ENCODE measurements at regions of chr2 and their contacts with region 1.

Region 1: GRCh38 chr2:96951093-96951654 is 35.2 kb downstream of the FAM178B start:
- DNase-seq: peak; percentile 91
- H3K4me3 ChIP-seq: peak overlapping the region in 1 of 2 experiments; percentile 26; a peak in 1 of 4 replicates
- H3K27ac ChIP-seq: no peak overlapping the region
- H3K4me1 ChIP-seq: peaks cover 0 to 36% of the 10 kb centered on the region in 2 experiments; a peak in 2 of 4 replicates
- H3K27me3 ChIP-seq: no peaks in the 10 kb centered on the region
- CTCF ChIP-seq: peak; percentile 86
- EP300 ChIP-seq: no peak
- RAD21 ChIP-seq: peak; percentile 92

Region 2: DNA sequence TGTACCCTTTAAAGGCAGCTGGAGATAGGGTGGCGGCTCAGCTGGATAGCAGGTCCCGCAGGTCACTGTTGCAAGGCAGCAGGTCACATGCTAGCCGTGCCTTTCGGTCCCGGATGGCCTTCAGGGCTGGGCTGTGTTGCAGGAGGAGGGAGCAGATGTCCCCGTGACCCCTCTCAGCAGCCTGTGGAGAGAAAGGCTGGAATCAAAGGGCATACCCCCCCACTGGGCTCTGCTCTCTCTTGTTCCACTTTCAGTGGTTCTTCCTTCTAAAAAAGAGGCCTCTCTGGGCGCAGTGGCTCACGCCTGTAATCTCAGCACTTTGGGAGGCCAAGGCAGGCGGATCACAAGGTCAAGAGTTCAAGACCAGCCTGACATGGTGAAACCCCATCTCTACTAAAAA is 102.9 kb before region 1 on chr2:
- CTCF ChIA-PET with region 1: interaction called, 21 read pairs
- POLR2A ChIA-PET with region 1: no interaction called
- DNase-seq: no peak
- H3K4me3 ChIP-seq: no peak overlapping the region
- H3K27ac ChIP-seq: no peak overlapping the region
- H3K4me1 ChIP-seq: no peaks in the 10 kb centered on the region; a peak in 1 of 4 replicates
- H3K27me3 ChIP-seq: no peaks in the 10 kb centered on the region
- CTCF ChIP-seq: no peak
- EP300 ChIP-seq: no peak
- RAD21 ChIP-seq: no peak

Region 3: DNA sequence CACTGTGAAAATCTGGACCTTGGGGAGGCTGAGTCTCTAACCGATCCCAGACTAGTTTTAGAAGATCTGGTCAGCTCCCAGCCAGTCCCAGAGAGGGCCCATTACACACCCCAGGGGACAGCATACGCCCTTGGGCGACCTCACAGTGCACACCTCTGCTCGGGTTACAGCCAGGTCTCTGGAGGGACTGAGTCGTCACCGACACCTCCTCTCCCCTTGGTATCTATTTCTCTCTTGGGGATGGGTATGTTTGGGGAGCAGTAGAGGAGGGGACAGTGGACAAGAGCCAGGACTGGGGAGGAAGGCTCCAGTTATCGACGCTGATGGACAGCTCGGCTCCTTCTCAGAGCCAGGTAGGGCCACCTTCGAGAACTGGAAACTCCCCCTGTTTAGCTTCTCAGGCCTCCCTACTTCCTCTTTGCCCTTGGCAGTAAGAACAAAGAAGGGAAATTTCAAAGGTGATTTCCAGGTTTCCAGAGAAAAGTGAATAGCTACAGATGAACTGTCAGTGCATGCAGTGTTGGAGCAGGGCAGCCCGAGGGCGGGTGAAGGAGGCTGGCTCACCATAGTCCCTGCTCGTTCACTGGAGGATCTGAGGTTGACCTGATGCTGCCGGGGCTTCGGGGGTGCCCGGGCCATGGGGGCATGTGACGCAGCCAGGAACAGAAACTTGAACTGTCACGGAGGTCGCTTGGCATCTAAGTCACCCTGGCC is 76.9 kb before region 1 on chr2:
- CTCF ChIA-PET with region 1: interaction called, 93 read pairs
- POLR2A ChIA-PET with region 1: no interaction called
- DNase-seq: no peak
- H3K4me3 ChIP-seq: no peak overlapping the region
- H3K27ac ChIP-seq: no peak overlapping the region
- H3K4me1 ChIP-seq: peaks cover 9 to 57% of the 10 kb centered on the region in 2 experiments; a peak in 2 of 4 replicates
- H3K27me3 ChIP-seq: no peaks in the 10 kb centered on the region
- CTCF ChIP-seq: no peak
- EP300 ChIP-seq: no peak
- RAD21 ChIP-seq: no peak

Region 4: DNA sequence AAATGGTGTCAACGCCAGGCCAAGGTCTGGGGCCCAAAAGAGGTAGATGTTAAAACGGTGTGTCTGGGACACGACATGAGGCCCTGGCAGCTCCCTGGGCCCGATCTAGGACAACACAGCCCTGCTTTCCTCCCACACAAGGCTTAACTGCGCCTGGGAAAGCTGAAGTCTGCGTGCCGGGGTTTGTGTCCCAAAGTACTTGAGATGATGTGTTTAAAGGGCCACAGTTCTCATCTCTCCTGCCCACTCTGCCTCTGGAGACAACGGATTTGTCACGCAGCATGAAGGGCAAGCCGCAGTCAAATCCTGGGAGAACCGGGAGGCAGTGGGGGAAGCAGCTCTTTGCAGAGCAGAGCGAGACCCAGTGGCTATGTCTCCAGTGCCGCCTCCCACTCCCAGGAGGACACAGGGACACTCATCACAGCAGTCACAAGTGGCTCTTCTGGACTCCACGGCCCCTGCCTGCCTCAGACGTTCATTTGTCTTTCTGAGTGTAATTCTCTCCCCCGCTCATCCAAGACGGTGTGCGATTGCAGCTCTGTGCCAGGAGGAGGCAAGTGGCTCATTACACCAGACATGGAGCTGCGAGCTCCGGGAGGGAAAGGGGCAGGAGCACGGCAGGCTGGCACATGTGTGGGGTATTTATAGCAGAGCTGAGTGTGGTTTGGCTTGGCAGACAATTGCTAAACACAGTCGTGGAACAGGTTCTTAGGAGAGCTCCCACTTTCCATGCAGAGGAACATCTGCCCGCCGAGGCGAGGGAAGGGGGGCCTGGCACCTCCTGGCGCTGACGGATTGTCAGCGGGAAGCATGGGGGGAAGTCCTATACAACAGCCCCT is 23.6 kb before region 1 on chr2:
- CTCF ChIA-PET with region 1: interaction called, 15 read pairs
- POLR2A ChIA-PET with region 1: no interaction called
- DNase-seq: no peak
- H3K4me3 ChIP-seq: no peak overlapping the region
- H3K27ac ChIP-seq: no peak overlapping the region
- H3K4me1 ChIP-seq: peaks cover 0 to 2% of the 10 kb centered on the region in 2 experiments; a peak in 1 of 4 replicates
- H3K27me3 ChIP-seq: peaks cover 5% of the 10 kb centered on the region; the same call in 1 of the 2 replicates
- CTCF ChIP-seq: no peak
- EP300 ChIP-seq: no peak
- RAD21 ChIP-seq: no peak

Measured in SK-N-SH (cell line).